ENCODE measurements at regions of chr9 and their contacts with region 1.

Region 1: DNA sequence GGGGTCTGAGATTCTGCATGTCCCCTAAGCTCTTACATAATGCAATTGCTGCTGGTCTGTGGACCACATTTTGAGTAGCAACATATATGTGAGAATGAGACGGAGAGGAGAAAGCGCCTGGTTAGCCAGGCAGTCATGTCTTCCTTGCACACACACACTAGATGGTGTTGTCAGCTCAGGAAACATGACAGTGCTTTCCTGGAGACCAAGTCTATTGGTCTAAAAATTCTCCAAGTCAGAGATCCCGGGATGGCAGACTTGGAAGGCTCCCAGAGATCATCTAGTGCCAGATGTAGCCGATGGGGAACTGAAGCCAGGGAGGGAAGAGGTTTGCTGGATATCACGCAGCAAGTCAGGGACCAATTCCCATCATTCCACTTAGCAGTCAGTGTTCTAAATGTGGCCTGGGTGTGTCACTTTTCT is 53.4 kb downstream of the GALNT12 start:
- DNase-seq: peak; percentile 97
- H3K4me3 ChIP-seq: no peak overlapping the region
- H3K27ac ChIP-seq: peak overlapping the region; percentile 48 to 59 (median 53)
- H3K4me1 ChIP-seq: peaks cover 25 to 51% (median 36%) of the 10 kb centered on the region in 4 donors
- H3K27me3 ChIP-seq: no peaks in the 10 kb centered on the region
- CTCF ChIP-seq: peak; percentile 71 to 79 (median 76)
- EP300 ChIP-seq: peak; percentile 86
- POLR2A ChIP-seq: no peak

Region 2: DNA sequence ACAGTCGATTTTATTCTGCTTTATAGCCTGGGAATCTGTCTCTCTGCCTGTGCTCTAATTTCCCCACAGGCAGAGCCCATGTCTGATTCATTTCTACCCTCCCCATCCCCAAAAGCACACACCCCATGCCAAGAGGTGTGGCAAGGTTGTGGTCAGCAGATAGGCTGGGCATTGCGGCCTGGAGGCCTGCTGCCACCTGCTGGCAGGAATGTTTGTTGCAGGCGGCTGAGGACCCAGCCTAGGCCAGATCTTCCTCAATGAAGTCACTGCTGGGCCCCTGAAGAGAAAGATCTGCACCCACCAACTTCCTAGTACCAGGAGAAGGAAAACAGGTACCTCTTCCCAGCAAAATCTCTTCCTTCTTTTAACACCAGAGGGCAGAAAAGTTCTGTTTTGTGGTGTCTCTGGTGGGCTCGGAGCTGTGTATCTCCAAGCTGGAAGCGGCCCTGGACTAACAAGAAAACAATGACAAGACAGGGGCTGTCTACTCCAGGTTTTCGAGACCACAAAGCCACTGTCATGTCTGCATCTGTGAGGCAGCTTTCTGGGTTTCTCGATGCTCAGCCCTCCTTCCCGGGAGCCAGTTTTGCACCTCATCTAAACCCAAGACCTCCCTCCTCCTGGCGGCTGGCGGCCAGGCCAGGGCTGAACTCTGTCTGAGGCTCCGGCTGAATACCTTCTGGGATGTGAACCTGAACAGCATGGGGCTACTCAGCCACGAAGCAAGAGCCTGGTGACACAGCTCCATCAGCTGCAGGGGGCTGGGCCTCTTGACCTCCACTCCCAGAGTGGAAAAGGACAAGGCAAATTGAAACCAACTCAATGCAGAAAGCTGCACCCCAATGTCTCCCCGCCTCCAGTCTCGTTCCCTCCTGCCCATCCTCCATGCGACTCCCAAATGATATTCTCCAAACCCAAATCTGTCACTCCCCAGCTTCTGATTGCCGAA is 69.5 kb before region 1 on chr9:
- intact Hi-C with region 1: no loop called
- DNase-seq: peak; percentile 95
- H3K4me3 ChIP-seq: no peak overlapping the region
- H3K27ac ChIP-seq: peak overlapping the region; percentile 41 to 58 (median 44)
- H3K4me1 ChIP-seq: peaks cover 10 to 49% (median 34%) of the 10 kb centered on the region in 4 donors
- H3K27me3 ChIP-seq: no peaks in the 10 kb centered on the region
- CTCF ChIP-seq: peak in 2 of 3 experiments; percentile 99
- EP300 ChIP-seq: no peak
- POLR2A ChIP-seq: no peak

Region 3: GRCh38 chr9:98944057-98944733 is 83.3 kb after region 1 on chr9:
- intact Hi-C with region 1: loop called (anchors 5 kb)
- DNase-seq: no peak
- H3K4me3 ChIP-seq: peak overlapping the region; percentile 66 to 78 (median 69)
- H3K27ac ChIP-seq: peak overlapping the region; percentile 87 to 92 (median 90)
- H3K4me1 ChIP-seq: peaks cover 29 to 81% (median 64%) of the 10 kb centered on the region in 4 donors
- H3K27me3 ChIP-seq: peaks cover 0 to 4% (median 0%) of the 10 kb centered on the region in 4 donors
- CTCF ChIP-seq: no peak
- EP300 ChIP-seq: no peak
- POLR2A ChIP-seq: no peak

Region 4: DNA sequence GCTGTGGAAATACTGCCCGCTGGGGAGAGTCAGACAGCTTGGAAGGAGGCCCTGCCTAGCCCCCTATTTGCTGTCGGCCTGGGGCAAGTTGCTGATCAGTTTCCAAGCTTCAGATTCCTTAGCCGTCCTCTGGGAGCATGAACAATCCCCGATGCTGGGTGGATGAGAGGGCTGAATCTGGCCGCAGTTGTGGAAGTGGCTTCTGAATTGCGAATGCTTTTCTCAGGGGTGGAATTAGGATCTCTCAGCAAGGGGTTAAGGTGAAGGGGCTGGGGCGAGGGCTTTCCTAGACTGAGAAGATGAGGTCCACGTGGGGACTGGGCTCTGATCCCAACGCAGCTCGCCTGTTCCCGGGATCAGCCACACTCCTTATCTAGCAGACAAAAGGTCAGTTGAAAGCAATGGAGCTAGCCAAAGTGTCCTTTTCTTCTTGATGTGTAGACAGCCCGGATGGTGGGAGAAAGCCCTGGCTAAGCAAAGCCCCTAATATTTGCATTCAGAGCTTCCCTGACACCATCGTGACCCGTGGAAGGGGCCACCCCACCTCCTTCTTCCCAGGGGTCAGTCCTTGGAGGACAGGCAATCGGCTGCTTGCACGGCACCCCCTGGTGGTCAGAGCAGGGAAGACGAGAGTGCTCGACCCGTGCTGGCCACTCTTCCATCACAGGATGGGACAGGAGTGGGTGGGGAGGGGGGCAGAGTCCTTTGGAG is 137.7 kb after region 1 on chr9:
- intact Hi-C with region 1: loop called (anchors 2 kb)
- DNase-seq: no peak
- H3K4me3 ChIP-seq: peak overlapping the region in 2 of 4 donors; percentile 6 to 9
- H3K27ac ChIP-seq: peak overlapping the region; percentile 78 to 86 (median 80)
- H3K4me1 ChIP-seq: peaks cover 51 to 62% (median 58%) of the 10 kb centered on the region in 4 donors
- H3K27me3 ChIP-seq: no peaks in the 10 kb centered on the region
- CTCF ChIP-seq: peak; percentile 84 to 94 (median 89)
- EP300 ChIP-seq: no peak
- POLR2A ChIP-seq: no peak

Region 5: DNA sequence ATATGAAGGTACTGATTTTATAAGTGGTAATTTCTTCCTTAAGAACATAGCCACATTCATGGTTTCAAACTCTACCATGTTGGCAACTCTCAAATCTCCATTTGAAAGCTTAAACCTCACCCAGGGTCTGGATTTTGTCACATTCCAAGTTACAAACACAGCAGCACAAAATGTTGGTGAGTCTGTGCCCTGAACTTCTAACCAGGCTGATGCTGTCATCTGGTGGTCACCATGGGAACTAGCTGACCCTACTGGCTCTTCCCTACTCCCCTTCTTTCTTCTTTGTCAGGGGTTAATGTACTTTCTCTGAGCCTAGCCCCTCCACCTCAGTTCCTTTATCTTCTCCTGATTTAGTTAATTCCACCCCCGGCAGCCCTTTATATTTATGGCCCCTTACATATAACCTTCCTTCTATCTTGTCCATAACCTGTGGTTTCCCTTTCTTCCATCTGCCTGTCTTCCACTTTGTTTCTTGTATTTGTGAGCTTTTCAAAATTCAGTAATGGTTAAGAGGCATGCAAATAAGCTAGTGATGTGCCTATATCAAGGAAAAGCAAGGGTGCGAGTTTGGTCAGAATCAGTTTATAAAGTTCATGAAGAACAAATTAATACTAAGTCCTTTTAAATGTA is 279.9 kb after region 1 on chr9:
- intact Hi-C with region 1: loop called (anchors 5 kb)
- DNase-seq: no peak
- H3K4me3 ChIP-seq: no peak overlapping the region
- H3K27ac ChIP-seq: peak overlapping the region in 2 of 4 donors; percentile 46 to 54
- H3K4me1 ChIP-seq: peaks cover 0 to 35% (median 20%) of the 10 kb centered on the region in 4 donors
- H3K27me3 ChIP-seq: no peaks in the 10 kb centered on the region
- CTCF ChIP-seq: peak; percentile 86 to 93 (median 87)
- EP300 ChIP-seq: no peak
- POLR2A ChIP-seq: no peak